Sigmoid colon (tissue), 7 donors: ENCODE measurements at regions of chr10 and their contacts with region 1.

Region 1: GRCh38 chr10:114482480-114483304 is 78.4 kb upstream of the AFAP1L2 start:
- DNase-seq: peak; percentile 82
- H3K4me3 ChIP-seq: no peak overlapping the region
- H3K27ac ChIP-seq: peak overlapping the region; percentile 13 to 63 (median 29)
- H3K4me1 ChIP-seq: peaks cover 0 to 7% (median 3%) of the 10 kb centered on the region in 4 donors
- H3K27me3 ChIP-seq: no peaks in the 10 kb centered on the region
- CTCF ChIP-seq: no peak
- EP300 ChIP-seq: no peak
- POLR2A ChIP-seq: no peak

Region 2: GRCh38 chr10:114181981-114182380 is 300.7 kb before region 1 on chr10:
- intact Hi-C with region 1: no loop called
- DNase-seq: no peak
- H3K4me3 ChIP-seq: no peak overlapping the region
- H3K27ac ChIP-seq: no peak overlapping the region
- H3K4me1 ChIP-seq: no peaks in the 10 kb centered on the region
- H3K27me3 ChIP-seq: no peaks in the 10 kb centered on the region
- CTCF ChIP-seq: no peak
- EP300 ChIP-seq: no peak
- POLR2A ChIP-seq: no peak

Region 3: DNA sequence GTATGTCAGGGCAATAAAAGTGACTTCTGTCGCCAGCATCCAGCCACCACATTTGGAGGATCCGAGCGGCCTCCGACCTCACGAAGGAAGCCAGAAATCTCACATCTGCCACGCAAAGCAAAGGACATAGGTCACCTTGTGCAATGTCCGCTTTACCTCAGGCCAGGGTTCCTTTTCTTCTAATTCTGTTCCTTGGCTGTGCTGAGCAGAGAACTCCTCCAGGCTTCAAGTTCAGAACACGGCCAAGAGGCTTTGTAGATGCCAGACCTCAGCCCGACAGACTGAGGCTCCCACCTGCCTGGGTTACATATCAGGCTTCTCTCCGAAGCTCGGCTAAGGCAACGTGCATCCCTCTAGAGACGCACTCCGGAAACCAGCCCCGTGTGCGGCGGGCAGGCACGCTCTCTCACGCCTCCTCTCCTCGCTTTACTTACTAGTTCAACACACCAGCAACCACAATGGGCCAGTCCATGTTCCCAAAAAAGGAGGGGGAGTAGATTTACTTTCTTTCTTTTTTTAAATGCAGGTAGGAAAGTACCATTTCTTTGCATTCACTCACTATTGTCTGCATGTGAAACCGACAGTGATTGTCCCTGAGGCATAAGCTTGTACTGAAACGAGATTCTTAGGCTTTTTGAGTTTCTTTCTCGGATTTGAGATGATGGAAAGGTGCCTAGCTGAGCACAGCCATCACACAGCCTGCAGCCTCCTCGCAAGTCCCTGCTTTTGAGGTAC is 44.0 kb after region 1 on chr10:
- intact Hi-C with region 1: loop called (anchors 5 kb)
- DNase-seq: peak; percentile 90
- H3K4me3 ChIP-seq: peak overlapping the region; percentile 8 to 34 (median 21)
- H3K27ac ChIP-seq: peak overlapping the region; percentile 40 to 75 (median 65)
- H3K4me1 ChIP-seq: peaks cover 0 to 24% (median 10%) of the 10 kb centered on the region in 4 donors
- H3K27me3 ChIP-seq: no peaks in the 10 kb centered on the region
- CTCF ChIP-seq: no peak
- EP300 ChIP-seq: no peak
- POLR2A ChIP-seq: peak; percentile 32 to 67